Posterior vena cava (tissue), 2 donors: ENCODE measurements at regions of chr9 and their contacts with region 1.

Region 1: DNA sequence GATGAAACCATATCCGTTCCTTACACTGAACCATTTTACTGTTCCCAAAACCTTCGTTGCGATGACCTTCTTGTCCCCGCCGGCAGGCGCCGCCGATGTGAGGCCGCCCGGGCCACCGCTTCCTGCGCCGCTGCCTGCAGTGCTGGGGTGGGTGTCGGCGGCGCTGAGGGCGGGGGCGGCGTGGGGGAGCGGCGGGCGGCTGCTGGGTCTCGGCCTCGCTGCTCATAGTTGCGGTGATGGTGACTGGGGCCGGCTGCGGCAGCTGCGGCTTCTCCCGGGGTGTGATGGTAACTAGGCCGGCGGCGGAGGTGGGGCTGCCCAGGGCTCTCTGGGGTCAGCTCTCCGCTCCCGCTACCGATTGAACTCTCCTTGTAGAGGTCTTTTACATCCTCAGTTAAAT is 14.1 kb upstream of the OR2S2 start:
- DNase-seq: no peak

Region 2: GRCh38 chr9:36123515-36123914 is 151.4 kb after region 1 on chr9:
- intact Hi-C with region 1: loop called in 1 of 2 experiments (anchors 5 kb)
- DNase-seq: no peak

Region 3: GRCh38 chr9:36612946-36613345 is 640.9 kb after region 1 on chr9:
- intact Hi-C with region 1: no loop called
- DNase-seq: no peak